GM10248 (cell line): ENCODE measurements at regions of chr21 and their contacts with region 1.

Region 1: DNA sequence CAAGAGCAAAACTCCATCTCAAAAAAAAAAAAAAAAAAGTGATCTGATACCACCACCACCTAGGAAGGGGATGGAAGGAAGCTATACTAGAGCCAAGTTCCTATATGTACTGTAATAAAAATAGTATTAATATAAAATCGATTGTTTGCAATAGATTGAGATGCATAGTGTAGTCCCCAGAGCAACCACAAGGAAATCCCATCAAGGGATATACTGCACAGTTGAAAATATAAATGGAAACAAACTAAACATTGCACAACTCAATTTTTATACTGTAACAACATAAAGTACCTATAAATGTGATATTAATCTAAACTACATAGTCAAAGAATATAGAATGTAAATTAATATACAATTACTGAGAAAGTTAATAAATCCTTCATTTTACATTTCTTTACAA is 20.9 kb upstream of the PSMG1 start:
- DNase-seq: no peak
- CTCF ChIP-seq: no peak

Region 2: GRCh38 chr21:39217356-39218081 is 13.4 kb after region 1 on chr21:
- CTCF ChIA-PET with region 1: interaction called, 11 read pairs
- POLR2A ChIA-PET with region 1: no interaction called
- DNase-seq: no peak
- CTCF ChIP-seq: no peak